Caco-2 (cell line): ENCODE measurements at regions of chr19 and their contacts with region 1.

Region 1: DNA sequence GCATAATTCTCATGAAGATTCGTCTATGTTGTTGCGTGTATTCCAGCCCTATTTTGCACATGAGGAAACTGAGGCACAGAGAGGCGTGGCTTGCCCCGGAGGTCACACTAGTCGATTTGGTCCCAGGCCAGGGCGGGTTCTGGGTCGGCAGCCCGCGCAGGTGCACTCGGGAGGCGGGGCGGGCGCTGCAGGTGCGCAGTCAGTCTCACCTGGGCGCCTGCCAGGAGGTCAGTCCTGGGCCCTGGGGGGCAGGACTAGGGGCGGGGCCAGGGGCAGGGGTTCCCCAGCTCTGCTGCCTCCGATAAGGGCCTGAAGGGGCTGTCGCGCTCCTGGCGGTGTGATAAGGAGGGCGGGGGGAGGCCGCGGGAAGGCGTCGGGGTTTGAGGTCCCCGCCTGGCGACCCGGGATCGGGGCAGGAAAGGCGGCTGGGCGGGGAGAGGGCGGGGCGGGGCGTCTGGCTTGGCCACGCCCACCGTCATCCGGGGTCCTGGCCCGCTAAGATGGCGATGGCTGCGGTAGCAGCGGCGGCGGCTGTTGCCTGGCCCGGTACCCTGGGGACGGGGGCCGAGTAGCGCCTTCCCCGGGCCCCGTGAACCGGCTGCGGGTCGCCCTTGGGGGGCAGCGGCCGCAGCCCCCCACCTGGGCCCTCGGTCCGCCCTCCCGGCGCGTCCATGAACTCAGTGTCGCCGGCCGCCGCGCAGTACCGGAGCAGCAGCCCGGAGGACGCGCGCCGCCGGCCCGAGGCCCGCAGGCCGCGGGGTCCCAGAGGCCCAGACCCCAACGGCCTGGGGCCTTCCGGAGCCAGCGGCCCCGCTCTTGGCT is at the start of gene ATG4D:
- DNase-seq: peak; percentile 95 to 97
- H3K4me3 ChIP-seq: peak within 1 kb of the TSS; percentile 78
- H3K4me3 Mint-ChIP-seq: peak within 1 kb of the TSS; percentile 78
- H3K27ac Mint-ChIP-seq: peak within 1 kb of the TSS; percentile 67
- H3K4me1 ChIP-seq: peaks cover 3% of the 10 kb centered on the region; the same call in 1 of the 2 replicates
- H3K4me1 Mint-ChIP-seq: no peaks in the 10 kb centered on the region
- H3K27me3 ChIP-seq: no peaks in the 10 kb centered on the region
- H3K27me3 Mint-ChIP-seq: no peaks in the 10 kb centered on the region
- CTCF ChIP-seq: no peak
- total RNA-seq, gene ATG4D: 34.3 and 34.6 TPM in 2 replicates

Region 2: DNA sequence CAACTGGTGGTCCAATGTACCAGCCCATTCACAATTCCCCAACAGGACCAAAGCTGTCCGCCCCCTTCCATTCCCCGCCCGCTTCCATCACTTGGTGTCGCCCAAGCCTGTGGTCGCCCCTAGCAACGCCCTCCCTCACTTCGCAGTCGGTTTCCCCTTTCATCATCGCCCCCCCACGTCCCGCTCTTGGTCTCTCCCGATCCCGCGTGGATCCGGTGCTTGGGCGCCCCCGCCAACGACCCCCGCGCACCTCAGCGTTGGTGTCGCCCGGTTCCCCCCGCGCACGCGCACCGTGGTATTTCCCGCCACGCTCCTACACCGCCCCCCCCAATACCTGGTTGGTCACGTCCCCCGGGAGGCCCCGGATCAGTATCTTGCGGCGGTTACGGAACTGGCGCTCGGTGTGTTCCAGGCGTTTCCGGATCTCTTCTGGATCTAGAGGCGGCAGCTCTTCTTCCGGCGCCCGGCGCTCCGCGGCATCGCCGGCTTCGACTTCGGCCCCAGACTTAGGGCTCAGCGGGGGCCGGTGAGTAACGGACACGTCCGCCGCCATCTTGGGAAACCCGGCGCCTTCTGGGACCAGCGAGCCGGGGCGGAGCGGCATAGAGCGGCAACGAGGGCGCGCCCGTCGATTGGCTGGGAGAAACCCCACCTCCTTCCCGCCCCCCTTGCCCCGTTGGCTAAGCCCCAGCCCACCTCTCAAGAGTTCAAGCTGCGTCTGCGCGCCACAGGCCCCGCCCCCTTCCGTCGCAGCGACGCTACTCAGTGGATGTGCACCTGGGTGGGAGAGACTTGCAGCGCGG is 210.5 kb before region 1 on chr19 and contains the start of gene RAVER1:
- CTCF ChIA-PET with region 1: no interaction called
- POLR2A ChIA-PET with region 1: no interaction called
- intact Hi-C with region 1: no loop called
- DNase-seq: peak; percentile 96
- H3K4me3 ChIP-seq: peak within 1 kb of the TSS; percentile 79
- H3K4me3 Mint-ChIP-seq: peak within 1 kb of the TSS; percentile 85
- H3K27ac Mint-ChIP-seq: peak within 1 kb of the TSS; percentile 81
- H3K4me1 ChIP-seq: peaks cover 6% of the 10 kb centered on the region; the same call in 1 of the 2 replicates
- H3K4me1 Mint-ChIP-seq: peaks cover 5% of the 10 kb centered on the region
- H3K27me3 ChIP-seq: no peaks in the 10 kb centered on the region
- H3K27me3 Mint-ChIP-seq: no peaks in the 10 kb centered on the region
- CTCF ChIP-seq: no peak
- total RNA-seq, gene RAVER1: 53.9 and 55.1 TPM in 2 replicates

Region 3: DNA sequence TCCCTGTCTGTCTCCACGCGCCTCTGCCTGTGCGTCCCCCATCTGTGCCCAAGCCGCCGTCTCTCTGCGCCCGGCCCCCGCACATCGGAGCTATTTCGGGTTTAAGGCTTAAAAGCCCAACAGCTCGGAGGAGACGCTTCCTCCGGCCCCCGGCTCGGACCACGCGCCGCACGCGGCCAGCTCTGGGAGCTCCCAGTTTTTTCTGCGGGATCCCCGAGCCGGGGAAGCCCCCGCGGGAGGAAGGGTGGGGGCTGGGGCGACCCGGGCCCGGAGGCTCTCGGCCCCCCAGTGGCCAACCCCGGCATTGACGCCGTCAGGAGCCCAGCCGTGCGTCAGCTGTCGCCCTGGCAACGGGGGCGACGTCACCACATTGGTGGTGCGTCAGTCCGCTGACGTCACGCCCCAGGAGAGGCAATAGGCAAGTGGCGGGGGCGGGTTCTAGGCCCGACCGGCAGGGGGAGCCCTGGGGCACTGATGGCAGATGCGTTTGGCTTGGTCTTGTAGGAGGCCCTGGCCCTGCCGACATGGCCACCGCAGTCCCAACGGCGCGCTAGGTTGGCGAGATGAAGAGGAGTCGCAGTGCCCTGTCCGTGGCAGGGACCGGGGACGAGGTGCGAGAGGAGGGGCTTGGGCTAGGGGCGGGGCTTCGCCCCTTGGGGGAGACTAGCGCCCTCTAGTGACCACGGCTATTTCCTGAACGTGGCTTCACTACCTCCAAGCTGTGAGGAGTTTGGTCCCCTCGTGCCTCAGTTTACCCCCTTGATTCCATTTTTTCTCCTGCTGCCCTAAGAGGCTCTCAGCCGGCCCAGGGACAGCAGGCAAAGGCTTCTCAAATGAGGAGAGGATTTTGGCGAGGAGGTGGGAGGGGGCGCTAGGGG is 127.0 kb before region 1 on chr19:
- CTCF ChIA-PET with region 1: no interaction called
- POLR2A ChIA-PET with region 1: interaction called, 10 read pairs
- intact Hi-C with region 1: no loop called
- DNase-seq: peak; percentile 84 to 91
- H3K4me3 ChIP-seq: peak overlapping the region; percentile 47
- H3K4me3 Mint-ChIP-seq: peak overlapping the region; percentile 61
- H3K27ac Mint-ChIP-seq: peak overlapping the region; percentile 40
- H3K4me1 ChIP-seq: peaks cover 15% of the 10 kb centered on the region
- H3K4me1 Mint-ChIP-seq: peaks cover 16% of the 10 kb centered on the region
- H3K27me3 ChIP-seq: peaks cover 4% of the 10 kb centered on the region
- H3K27me3 Mint-ChIP-seq: peaks cover 23% of the 10 kb centered on the region
- CTCF ChIP-seq: peak; percentile 81 to 84

Region 4: GRCh38 chr19:10502524-10503001 is 41.1 kb before region 1 on chr19:
- CTCF ChIA-PET with region 1: no interaction called
- POLR2A ChIA-PET with region 1: no interaction called
- intact Hi-C with region 1: loop called (anchors 5 kb)
- DNase-seq: peak; percentile 95 to 96
- H3K4me3 ChIP-seq: peak overlapping the region; percentile 95
- H3K4me3 Mint-ChIP-seq: peak overlapping the region; percentile 84
- H3K27ac Mint-ChIP-seq: peak overlapping the region; percentile 79
- H3K4me1 ChIP-seq: peaks cover 7% of the 10 kb centered on the region
- H3K4me1 Mint-ChIP-seq: peaks cover 7% of the 10 kb centered on the region
- H3K27me3 ChIP-seq: no peaks in the 10 kb centered on the region
- H3K27me3 Mint-ChIP-seq: no peaks in the 10 kb centered on the region
- CTCF ChIP-seq: no peak

Region 5: DNA sequence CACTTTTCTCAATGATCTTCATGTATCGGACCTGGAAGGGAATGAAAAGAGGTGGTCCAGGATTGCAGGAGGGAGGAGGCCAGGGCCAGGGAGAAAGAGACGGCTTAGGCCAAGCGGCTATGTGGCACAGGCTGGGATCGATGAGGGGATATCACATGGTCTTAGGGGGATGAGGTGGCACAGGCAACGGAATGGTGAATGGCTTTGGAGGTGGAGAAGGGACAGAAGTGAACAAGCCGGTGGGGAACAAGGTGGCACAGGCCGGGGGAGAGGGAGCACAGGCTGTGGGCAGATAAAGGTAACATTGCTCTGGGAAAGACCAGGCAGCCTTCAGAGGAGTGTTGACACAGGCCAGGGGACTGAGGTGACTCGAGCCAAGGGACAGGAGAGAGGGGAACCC is 30.8 kb after region 1 on chr19:
- CTCF ChIA-PET with region 1: no interaction called
- POLR2A ChIA-PET with region 1: no interaction called
- intact Hi-C with region 1: no loop called
- DNase-seq: no peak
- H3K4me3 ChIP-seq: no peak overlapping the region
- H3K4me3 Mint-ChIP-seq: peak overlapping the region; percentile 29
- H3K27ac Mint-ChIP-seq: peak overlapping the region; percentile 36
- H3K4me1 ChIP-seq: peaks cover 15% of the 10 kb centered on the region
- H3K4me1 Mint-ChIP-seq: peaks cover 15% of the 10 kb centered on the region
- H3K27me3 ChIP-seq: no peaks in the 10 kb centered on the region
- H3K27me3 Mint-ChIP-seq: no peaks in the 10 kb centered on the region
- CTCF ChIP-seq: no peak

Region 6: GRCh38 chr19:10587022-10587789 is 43.6 kb after region 1 on chr19 and contains the start of gene AP1M2:
- CTCF ChIA-PET with region 1: no interaction called
- POLR2A ChIA-PET with region 1: no interaction called
- intact Hi-C with region 1: no loop called
- DNase-seq: peak; percentile 74 to 76
- H3K4me3 ChIP-seq: peak within 1 kb of the TSS; percentile 66
- H3K4me3 Mint-ChIP-seq: peak within 1 kb of the TSS; percentile 80
- H3K27ac Mint-ChIP-seq: peak within 1 kb of the TSS; percentile 65
- H3K4me1 ChIP-seq: no peaks in the 10 kb centered on the region
- H3K4me1 Mint-ChIP-seq: peaks cover 9% of the 10 kb centered on the region
- H3K27me3 ChIP-seq: no peaks in the 10 kb centered on the region
- H3K27me3 Mint-ChIP-seq: no peaks in the 10 kb centered on the region
- CTCF ChIP-seq: no peak
- total RNA-seq, gene AP1M2: 191 and 196 TPM in 2 replicates

Region 7: DNA sequence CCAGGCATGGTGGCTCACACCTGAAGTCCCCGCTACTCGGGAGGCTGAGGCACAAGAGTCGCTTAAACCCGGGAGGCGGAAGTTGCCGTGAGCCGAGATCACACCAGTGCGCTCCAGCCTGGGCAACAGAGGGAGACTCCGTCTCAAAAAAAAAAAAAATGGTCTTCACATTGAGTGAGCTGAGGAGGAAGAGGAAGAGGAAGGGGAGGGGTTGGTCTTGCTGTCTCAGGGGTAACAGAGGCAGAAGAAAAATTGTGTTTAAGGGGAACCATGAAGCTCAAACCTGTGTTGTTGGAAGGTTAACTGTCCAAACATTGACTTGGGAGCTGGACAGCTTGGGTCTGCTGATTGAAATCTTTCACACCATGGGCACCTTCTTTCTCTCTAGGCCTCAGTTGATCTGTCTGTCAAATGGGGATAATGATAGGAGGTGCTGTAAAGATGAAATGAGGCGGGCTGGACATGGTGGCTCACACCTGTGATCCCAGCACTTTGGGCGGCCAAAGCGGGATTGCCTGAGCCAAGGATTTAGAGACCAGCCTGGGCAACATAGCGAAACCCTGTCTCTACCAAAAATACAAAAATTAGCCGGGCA is 71.9 kb after region 1 on chr19:
- CTCF ChIA-PET with region 1: no interaction called
- POLR2A ChIA-PET with region 1: no interaction called
- intact Hi-C with region 1: no loop called
- DNase-seq: no peak
- H3K4me3 ChIP-seq: no peak overlapping the region
- H3K4me3 Mint-ChIP-seq: no peak overlapping the region
- H3K27ac Mint-ChIP-seq: no peak overlapping the region
- H3K4me1 ChIP-seq: peaks cover 11% of the 10 kb centered on the region
- H3K4me1 Mint-ChIP-seq: peaks cover 8% of the 10 kb centered on the region
- H3K27me3 ChIP-seq: no peaks in the 10 kb centered on the region
- H3K27me3 Mint-ChIP-seq: no peaks in the 10 kb centered on the region
- CTCF ChIP-seq: no peak